ENCODE measurements at regions of chr2 and their contacts with region 1.

Region 1: GRCh38 chr2:198930170-198930569 is 527.6 kb downstream of the SATB2 start:
- DNase-seq: no peak
- ATAC-seq: no peak

Region 2: DNA sequence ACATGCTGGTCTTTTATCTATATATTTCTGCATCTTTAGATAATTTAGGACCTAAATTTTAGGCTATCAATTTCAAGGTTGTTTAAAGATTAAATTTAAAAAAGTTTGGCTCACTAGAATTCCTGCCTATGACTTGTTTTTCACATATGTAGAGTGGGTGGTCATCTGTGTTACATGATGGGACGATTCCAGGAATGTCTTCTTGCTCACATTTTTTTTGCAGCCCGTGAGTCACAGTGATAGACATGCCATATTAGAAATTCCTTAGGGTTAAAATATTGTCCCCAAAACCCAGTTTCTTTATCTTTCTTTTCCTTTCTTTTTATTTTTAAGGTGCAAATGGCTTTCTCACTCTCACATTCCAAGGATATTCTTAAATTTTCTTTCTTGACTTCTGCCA is 473.8 kb before region 1 on chr2:
- intact Hi-C with region 1: loop called in 1 of 2 experiments (anchors 5 kb)
- DNase-seq: no peak
- ATAC-seq: no peak

Measured in left cardiac atrium (tissue), 4 donors.